ENCODE measurements at regions of chr15 and their contacts with region 1.

Region 1: DNA sequence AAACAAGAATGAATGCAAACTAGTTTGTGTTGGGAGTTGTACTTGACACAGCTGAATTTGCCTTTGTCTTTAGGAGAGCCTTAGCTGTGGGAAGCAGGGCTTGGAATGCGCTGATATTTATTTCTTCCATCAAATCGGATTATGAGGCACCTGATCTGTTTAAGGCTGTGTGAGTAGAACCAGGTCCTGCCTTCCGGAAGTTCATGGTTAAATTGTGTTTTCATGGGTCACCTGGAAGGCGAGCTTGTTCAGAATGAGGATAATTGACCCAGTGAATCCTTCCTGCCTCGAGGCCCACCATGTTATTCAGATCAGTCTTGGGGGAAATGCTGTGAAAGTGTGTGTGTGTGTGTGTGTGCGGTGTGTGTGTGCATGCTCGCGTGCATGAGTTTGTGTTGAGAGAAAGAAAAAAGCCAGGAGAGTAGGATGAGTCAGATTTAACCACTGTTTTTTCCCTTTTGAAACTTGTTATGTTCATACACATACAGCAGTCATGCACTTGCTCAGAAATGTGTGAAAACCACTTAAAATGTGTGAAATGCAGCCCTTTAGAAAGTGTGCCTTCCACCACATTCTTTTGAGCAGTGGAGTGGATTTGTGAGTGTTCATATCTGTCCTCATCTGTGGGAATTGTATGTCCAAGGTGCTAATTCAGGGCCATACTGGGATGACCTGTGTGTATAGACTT is 36.7 kb downstream of the SMAD3 start:
- DNase-seq: peak; percentile 68
- ATAC-seq: peak; percentile 52
- H3K4me3 Mint-ChIP-seq: no peak overlapping the region
- H3K27ac Mint-ChIP-seq: no peak overlapping the region
- H3K4me1 Mint-ChIP-seq: peaks cover 29% of the 10 kb centered on the region
- H3K27me3 Mint-ChIP-seq: no peaks in the 10 kb centered on the region
- CTCF ChIP-seq: no peak

Region 2: DNA sequence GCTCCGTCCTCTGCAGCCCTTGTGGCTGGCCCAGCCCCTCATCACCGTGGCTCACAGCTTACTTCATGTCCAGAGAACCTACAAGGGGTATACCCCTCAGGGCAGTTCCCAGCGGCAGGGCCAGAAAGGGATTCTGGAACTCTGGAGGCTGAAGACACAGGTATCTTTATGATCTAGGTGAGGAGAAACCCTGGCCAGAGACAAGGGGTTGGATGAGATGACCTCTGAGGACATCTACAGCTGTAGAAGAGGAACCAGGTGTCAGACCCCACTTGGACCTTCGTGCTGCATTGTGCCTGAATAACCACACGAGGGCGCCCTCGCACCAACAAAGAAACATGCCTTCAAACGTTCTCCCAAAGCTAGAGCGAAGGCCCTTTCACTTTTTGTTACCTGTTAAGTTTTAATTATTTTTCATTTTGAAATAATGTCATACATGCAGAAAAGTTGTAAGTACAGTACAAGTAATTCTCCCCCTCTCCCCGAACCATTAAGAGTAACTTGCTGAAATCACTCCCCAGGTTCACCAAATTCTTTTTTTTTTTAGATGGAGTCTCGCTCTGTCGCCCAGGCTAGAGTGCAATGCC is 155.4 kb before region 1 on chr15:
- CTCF ChIA-PET with region 1: interaction called, 10 read pairs
- POLR2A ChIA-PET with region 1: interaction called, 3 read pairs
- intact Hi-C with region 1: no loop called
- DNase-seq: peak; percentile 82
- ATAC-seq: peak; percentile 89
- H3K4me3 Mint-ChIP-seq: no peak overlapping the region
- H3K27ac Mint-ChIP-seq: no peak overlapping the region
- H3K4me1 Mint-ChIP-seq: peaks cover 2% of the 10 kb centered on the region
- H3K27me3 Mint-ChIP-seq: no peaks in the 10 kb centered on the region
- CTCF ChIP-seq: peak; percentile 89

Region 3: GRCh38 chr15:67080900-67081431 is 21.1 kb before region 1 on chr15:
- CTCF ChIA-PET with region 1: interaction called, 46 read pairs
- POLR2A ChIA-PET with region 1: interaction called, 51 read pairs
- intact Hi-C with region 1: loop called (anchors 1 kb)
- DNase-seq: peak; percentile 84
- ATAC-seq: peak; percentile 29
- H3K4me3 Mint-ChIP-seq: no peak overlapping the region
- H3K27ac Mint-ChIP-seq: peak overlapping the region; percentile 69
- H3K4me1 Mint-ChIP-seq: peaks cover 72% of the 10 kb centered on the region
- H3K27me3 Mint-ChIP-seq: no peaks in the 10 kb centered on the region
- CTCF ChIP-seq: no peak

Region 4: DNA sequence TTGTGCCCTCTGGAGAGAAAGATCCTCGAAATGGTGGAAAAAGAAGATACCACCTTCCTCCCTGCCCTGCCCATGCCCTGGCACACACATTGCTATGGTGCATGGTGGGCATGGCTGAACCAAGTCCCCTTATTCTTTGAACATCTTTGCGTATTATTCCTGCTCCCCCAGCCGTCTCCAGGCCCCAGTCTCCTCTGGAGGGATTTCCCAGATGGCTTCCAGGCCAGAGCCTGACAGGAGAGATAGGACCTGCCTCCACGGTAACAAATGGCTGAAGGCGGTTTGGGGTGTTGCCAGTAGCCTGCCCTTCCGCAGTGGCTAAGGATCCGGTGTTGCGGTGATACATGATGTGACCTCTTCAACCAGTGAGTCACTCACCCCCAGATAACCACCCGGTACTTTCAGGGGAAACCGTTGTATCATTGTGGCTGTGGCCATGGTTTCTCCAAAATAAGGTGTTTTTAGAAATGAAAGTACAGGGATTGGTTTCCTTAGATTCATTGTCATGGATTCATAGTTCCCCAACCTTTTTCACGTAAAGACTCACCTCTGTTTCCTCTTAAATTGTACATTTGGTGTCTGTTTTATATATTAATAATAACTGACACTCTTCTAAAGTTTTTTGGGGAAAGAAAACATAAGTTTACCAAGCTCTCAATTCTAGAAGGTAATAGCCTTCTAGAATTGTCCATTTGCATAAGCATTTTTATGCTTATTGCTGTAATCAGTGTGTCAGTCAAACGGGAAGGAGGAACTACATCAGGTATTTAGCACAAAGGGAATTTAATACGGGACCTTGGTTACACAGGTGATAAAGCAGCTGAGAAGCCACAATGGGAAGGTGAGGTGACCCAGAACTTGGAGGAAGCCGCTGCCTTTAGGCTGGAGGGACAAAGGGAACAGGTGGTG is 10.7 kb before region 1 on chr15:
- CTCF ChIA-PET with region 1: interaction called, 46 read pairs
- POLR2A ChIA-PET with region 1: interaction called, 51 read pairs
- intact Hi-C with region 1: no loop called
- DNase-seq: peak; percentile 90
- ATAC-seq: peak; percentile 86
- H3K4me3 Mint-ChIP-seq: peak overlapping the region; percentile 34
- H3K27ac Mint-ChIP-seq: peak overlapping the region; percentile 72
- H3K4me1 Mint-ChIP-seq: peaks cover 86% of the 10 kb centered on the region
- H3K27me3 Mint-ChIP-seq: no peaks in the 10 kb centered on the region
- CTCF ChIP-seq: no peak

Region 5: DNA sequence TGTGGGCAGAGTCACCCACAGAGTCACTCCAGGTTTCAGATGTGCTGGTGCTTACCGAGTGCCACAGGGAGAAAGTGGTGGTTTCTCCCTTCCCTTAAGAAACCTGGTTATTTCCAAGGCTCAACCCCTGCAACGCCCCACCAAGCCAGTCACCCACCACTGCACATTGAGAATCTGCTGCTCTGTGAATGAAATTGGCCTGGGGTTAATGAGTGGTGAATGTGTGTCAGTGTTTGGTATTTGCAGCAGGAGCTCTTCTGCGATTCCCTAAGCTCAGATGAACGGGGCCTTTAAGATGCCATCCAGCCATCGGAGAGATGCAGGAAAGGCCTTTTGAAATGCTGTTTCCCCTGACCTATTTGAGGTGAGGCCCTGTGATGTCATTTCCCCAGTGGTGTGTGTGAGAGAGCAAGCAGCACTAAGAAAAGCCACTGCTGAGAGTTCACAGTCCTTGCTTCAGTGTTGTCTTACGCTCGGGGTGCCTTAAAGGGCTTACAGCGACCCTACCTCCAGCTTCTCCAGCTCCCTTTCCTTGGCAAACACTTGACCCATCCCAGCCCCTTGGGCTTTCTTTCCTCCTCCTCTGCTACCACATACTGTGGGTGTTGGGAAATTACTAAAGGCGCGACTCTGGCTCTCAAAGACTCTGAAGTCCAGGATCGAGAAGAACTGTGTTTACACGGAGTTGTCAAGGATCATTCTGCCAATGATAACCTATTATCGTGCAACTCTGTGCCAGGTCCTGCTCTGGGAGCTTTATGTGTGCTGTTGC is 32.2 kb after region 1 on chr15:
- CTCF ChIA-PET with region 1: interaction called, 5 read pairs
- POLR2A ChIA-PET with region 1: interaction called, 12 read pairs
- intact Hi-C with region 1: no loop called
- DNase-seq: peak; percentile 84
- ATAC-seq: peak; percentile 92
- H3K4me3 Mint-ChIP-seq: peak overlapping the region; percentile 65
- H3K27ac Mint-ChIP-seq: peak overlapping the region; percentile 90
- H3K4me1 Mint-ChIP-seq: peaks cover 81% of the 10 kb centered on the region
- H3K27me3 Mint-ChIP-seq: no peaks in the 10 kb centered on the region
- CTCF ChIP-seq: no peak

Measured in activated CD8-positive, alpha-beta T cell treated with anti-CD3 and anti-CD28 coated beads for 36 hours (primary cell).